ENCODE measurements at regions of chr5 and their contacts with region 1.

Region 1: GRCh38 chr5:37184748-37185364 is 64.3 kb downstream of the CPLANE1 start:
- DNase-seq: peak; percentile 60
- ATAC-seq: peak; percentile 88
- H3K4me3 ChIP-seq: no peak overlapping the region
- H3K27ac ChIP-seq: no peak overlapping the region; the same call in 1 of the 2 replicates
- H3K4me1 ChIP-seq: peaks cover 4% of the 10 kb centered on the region; the same call in 1 of the 2 replicates
- H3K27me3 ChIP-seq: no peaks in the 10 kb centered on the region
- CTCF ChIP-seq: no peak
- EP300 ChIP-seq: peak in 1 of 2 experiments; percentile 44; a peak in 1 of 4 replicates
- POLR2A ChIP-seq: no peak
- RAD21 ChIP-seq: no peak

Region 2: GRCh38 chr5:37111426-37112382 is 73.2 kb before region 1 on chr5:
- CTCF ChIA-PET with region 1: no interaction called
- POLR2A ChIA-PET with region 1: no interaction called
- RAD21 ChIA-PET with region 1: interaction called, 4 read pairs
- SMC1A ChIA-PET with region 1: interaction called, 6 read pairs
- in situ Hi-C with region 1: no loop called
- intact Hi-C with region 1: loop called (anchors 5 kb)
- DNase-seq: peak; percentile 64
- ATAC-seq: peak; percentile 91
- H3K4me3 ChIP-seq: peak overlapping the region; percentile 34; the same call in 1 of the 2 replicates
- H3K27ac ChIP-seq: peak overlapping the region; percentile 77
- H3K4me1 ChIP-seq: peaks cover 21% of the 10 kb centered on the region
- H3K27me3 ChIP-seq: no peaks in the 10 kb centered on the region
- CTCF ChIP-seq: no peak
- EP300 ChIP-seq: peak; percentile 52 to 66; a peak in 2 of 4 replicates
- POLR2A ChIP-seq: no peak
- RAD21 ChIP-seq: no peak

Region 3: DNA sequence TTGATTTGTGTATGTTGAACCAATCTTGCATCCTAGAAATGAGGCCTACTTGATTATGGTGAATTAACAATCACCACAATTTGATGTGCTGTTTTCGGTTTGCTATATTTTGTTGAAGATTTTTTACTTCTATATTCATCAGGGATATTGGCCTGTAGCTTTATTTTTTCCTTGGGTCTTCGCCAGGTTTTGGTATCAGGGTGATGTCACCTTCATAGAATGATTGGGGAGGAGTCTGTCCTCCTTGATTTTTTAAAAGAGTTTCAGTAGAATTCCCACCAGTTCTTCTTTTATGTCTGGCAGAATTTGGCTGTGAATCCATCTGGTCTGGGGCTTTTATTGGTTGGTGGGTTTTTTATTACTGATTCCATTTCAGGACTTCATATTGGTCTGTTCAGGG is 50.9 kb before region 1 on chr5:
- CTCF ChIA-PET with region 1: no interaction called
- POLR2A ChIA-PET with region 1: no interaction called
- RAD21 ChIA-PET with region 1: no interaction called
- SMC1A ChIA-PET with region 1: no interaction called
- in situ Hi-C with region 1: no loop called
- intact Hi-C with region 1: no loop called
- DNase-seq: no peak
- ATAC-seq: no peak
- H3K4me3 ChIP-seq: no peak overlapping the region
- H3K27ac ChIP-seq: no peak overlapping the region
- H3K4me1 ChIP-seq: no peaks in the 10 kb centered on the region
- H3K27me3 ChIP-seq: no peaks in the 10 kb centered on the region
- CTCF ChIP-seq: no peak
- EP300 ChIP-seq: no peak
- POLR2A ChIP-seq: no peak
- RAD21 ChIP-seq: no peak

Region 4: DNA sequence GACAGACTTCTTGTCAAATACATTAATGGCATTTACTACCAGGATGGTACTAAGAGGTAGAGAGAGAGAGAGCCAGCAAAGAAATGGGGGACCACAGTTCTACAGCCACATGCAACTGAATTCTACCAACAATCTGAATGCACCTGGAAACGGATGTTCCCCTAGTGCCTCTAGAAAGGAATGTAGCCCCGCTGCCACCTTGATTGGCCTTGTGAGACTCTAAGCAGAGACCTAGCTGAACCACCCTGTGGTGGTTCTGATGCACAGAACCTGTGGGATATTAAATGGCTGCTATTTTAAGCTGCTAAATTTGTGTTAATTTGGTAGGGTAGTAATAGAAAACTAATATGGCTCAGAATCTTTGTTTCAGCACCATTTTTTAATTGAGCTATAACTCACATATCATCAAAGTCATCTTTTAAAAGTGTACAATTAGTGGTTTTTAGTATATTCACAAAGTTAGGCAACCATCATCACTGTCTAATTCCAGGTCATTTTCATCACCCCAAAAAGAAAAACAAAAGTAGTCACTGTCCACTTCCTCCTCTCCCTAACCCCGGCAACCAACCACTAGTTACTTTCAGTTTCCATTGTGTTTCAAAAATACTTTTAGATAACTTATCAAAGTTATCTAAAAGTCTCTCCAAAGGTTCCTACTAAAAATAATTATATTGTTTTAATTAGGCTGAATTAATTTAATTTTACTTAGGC is 12.6 kb after region 1 on chr5:
- CTCF ChIA-PET with region 1: interaction called, 8 read pairs
- POLR2A ChIA-PET with region 1: interaction called, 5 read pairs
- RAD21 ChIA-PET with region 1: interaction called, 6 read pairs
- SMC1A ChIA-PET with region 1: interaction called, 20 read pairs
- in situ Hi-C with region 1: no loop called
- intact Hi-C with region 1: no loop called
- DNase-seq: no peak
- ATAC-seq: peak; percentile 93
- H3K4me3 ChIP-seq: 0 out of 2 replicates have a peak overlapping the region, but pooled peaks have one; percentile 3
- H3K27ac ChIP-seq: peak overlapping the region; percentile 85
- H3K4me1 ChIP-seq: peaks cover 13% of the 10 kb centered on the region
- H3K27me3 ChIP-seq: no peaks in the 10 kb centered on the region
- CTCF ChIP-seq: no peak
- EP300 ChIP-seq: peak; percentile 23 to 48; a peak in 1 of 4 replicates
- POLR2A ChIP-seq: no peak
- RAD21 ChIP-seq: no peak